ENCODE measurements at regions of chr5 and their contacts with region 1.

Region 1: DNA sequence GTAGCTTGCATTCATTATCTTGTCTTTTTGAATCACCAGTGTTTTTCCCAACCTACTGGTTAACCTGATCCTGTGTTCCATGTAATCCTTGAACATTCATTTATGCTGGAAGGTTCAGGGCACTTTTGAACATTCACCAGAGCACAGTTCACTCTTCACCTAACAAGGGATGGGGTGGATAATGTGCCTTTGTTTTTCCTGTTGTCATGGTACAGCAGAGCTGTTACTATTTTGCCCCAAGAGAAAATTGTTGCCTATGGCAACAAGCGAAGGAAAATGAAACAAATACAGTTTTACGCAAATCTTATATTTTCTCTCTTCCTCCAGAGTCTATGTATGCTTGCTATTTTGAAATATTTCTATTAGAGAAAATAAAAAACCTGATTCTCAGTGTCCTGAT is 60.3 kb upstream of the RIOK2 start:
- DNase-seq: no peak
- H3K4me3 ChIP-seq: no peak overlapping the region
- H3K27ac ChIP-seq: no peak overlapping the region
- H3K4me1 ChIP-seq: no peaks in the 10 kb centered on the region
- H3K27me3 ChIP-seq: no peaks in the 10 kb centered on the region
- CTCF ChIP-seq: no peak
- EP300 ChIP-seq: no peak
- POLR2A ChIP-seq: no peak

Region 2: GRCh38 chr5:97276474-97277120 is 33.2 kb after region 1 on chr5:
- in situ Hi-C with region 1: no loop called
- intact Hi-C with region 1: loop called (anchors 2 kb)
- DNase-seq: no peak
- H3K4me3 ChIP-seq: no peak overlapping the region
- H3K27ac ChIP-seq: no peak overlapping the region
- H3K4me1 ChIP-seq: no peaks in the 10 kb centered on the region
- H3K27me3 ChIP-seq: no peaks in the 10 kb centered on the region
- CTCF ChIP-seq: no peak
- EP300 ChIP-seq: no peak
- POLR2A ChIP-seq: no peak

Measured in transverse colon (tissue), 4 donors.